ENCODE measurements at regions of chr11 and their contacts with region 1.

Region 1: DNA sequence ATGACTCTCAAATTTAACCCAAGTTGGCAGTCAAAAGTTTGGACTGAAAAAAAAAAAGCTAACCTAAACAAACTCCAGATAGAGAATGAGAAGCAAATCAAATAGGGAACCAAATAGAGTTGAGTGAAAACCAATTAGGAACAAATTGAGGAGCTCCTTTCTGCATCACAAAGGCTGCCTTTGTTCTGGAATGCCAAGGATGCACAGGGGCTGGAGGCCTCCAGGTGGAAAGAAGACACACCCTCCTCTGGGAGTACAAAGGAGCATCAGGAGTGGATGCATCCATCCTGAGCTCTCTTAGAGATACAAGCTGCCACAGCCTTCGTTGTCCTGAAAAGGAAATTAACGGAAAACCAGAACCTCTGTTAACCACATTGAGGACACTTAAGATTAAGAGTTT is 73.3 kb downstream of the MRGPRX1 start:
- DNase-seq: peak in 1 of 2 experiments; percentile 46
- H3K4me3 ChIP-seq: peak overlapping the region in 1 of 4 experiments; percentile 26; a peak in 1 of 8 replicates
- H3K27ac ChIP-seq: peak overlapping the region; percentile 0; the same call in 1 of the 2 replicates
- H3K4me1 ChIP-seq: peaks cover 0 to 12% (median 6%) of the 10 kb centered on the region in 4 experiments; a peak in 4 of 7 replicates
- H3K27me3 ChIP-seq: no peaks in the 10 kb centered on the region
- CTCF ChIP-seq: no peak
- EP300 ChIP-seq: peak in 1 of 2 experiments; percentile 62; a peak in 1 of 3 replicates
- POLR2A ChIP-seq: peak in 1 of 2 experiments; percentile 25; a peak in 1 of 3 replicates
- RAD21 ChIP-seq: no peak

Region 2: GRCh38 chr11:18749697-18750319 is 116.1 kb before region 1 on chr11:
- CTCF ChIA-PET with region 1: no interaction called
- POLR2A ChIA-PET with region 1: no interaction called
- DNase-seq: no peak
- H3K4me3 ChIP-seq: no peak overlapping the region
- H3K27ac ChIP-seq: no peak overlapping the region
- H3K4me1 ChIP-seq: peaks cover 0 to 8% (median 4%) of the 10 kb centered on the region in 4 experiments; a peak in 4 of 7 replicates
- H3K27me3 ChIP-seq: no peaks in the 10 kb centered on the region
- CTCF ChIP-seq: no peak
- EP300 ChIP-seq: no peak
- POLR2A ChIP-seq: no peak
- RAD21 ChIP-seq: no peak

Region 3: DNA sequence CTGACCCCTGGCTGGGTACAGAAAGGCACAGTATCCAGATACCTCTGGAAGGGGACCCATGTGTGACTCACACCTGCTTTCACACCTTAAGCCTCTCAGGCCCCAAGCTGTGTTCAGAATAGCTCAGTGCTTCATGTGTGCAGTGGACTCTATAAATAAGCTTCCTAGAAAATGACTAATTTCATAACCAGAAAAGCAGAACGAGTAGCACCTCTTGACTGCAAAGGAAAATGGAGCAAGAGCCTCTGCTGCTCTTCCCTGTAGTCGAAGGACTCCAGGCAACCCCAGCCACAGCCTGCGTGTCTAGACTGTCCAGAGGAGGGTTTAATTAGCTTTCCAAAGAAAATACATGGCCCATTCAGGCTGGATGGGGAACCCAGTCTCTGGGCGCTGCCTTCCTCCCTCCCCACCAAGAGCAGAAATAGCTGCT is 97.5 kb before region 1 on chr11:
- CTCF ChIA-PET with region 1: no interaction called
- POLR2A ChIA-PET with region 1: no interaction called
- DNase-seq: no peak
- H3K4me3 ChIP-seq: no peak overlapping the region
- H3K27ac ChIP-seq: no peak overlapping the region
- H3K4me1 ChIP-seq: peaks cover 0 to 15% (median 7%) of the 10 kb centered on the region in 4 experiments; a peak in 6 of 7 replicates
- H3K27me3 ChIP-seq: 0 out of 7 replicates have a peak, but pooled peaks cover 0 to 3% (median 0%) of the 10 kb centered on the region in 4 experiments
- CTCF ChIP-seq: no peak
- EP300 ChIP-seq: no peak
- POLR2A ChIP-seq: no peak
- RAD21 ChIP-seq: no peak

Region 4: GRCh38 chr11:18844753-18845367 is 21.1 kb before region 1 on chr11:
- CTCF ChIA-PET with region 1: interaction called, 48 read pairs
- POLR2A ChIA-PET with region 1: no interaction called
- DNase-seq: no peak
- H3K4me3 ChIP-seq: no peak overlapping the region
- H3K27ac ChIP-seq: no peak overlapping the region
- H3K4me1 ChIP-seq: no peaks in the 10 kb centered on the region
- H3K27me3 ChIP-seq: no peaks in the 10 kb centered on the region
- CTCF ChIP-seq: peak in 2 of 3 experiments; percentile 56 to 82; a peak in 3 of 4 replicates
- EP300 ChIP-seq: no peak
- POLR2A ChIP-seq: no peak
- RAD21 ChIP-seq: peak; percentile 61 to 66

Region 5: DNA sequence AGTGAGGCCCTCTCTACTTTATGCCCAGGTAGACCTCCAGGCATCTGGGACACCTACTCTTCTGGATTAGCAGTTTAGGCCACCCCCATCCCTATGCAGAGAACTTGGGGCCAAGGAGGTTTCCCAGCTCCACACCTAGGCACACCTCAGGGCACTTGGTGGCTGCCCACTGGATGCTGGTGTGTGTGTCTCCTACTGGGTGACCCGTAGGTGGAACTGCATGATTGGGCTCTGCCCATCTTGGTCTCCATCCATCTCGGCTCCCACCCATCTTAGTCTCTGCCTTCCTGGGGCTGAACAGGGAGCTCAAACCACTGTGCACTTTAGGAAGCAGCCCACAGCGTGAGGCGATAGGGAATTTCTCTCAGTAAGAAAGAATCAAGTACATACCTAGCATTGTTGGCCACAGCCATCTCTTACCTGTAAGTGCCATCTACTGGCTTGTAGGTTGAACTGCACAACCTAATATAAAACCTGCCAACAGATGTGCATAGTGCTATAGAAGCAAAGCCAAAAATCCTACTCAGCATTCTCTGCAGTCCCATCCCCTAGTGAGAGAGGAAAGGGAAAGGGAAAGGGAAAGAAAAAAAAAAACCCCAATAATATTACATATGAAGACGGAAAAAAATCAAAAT is 12.7 kb before region 1 on chr11:
- CTCF ChIA-PET with region 1: interaction called, 48 read pairs
- POLR2A ChIA-PET with region 1: interaction called, 3 read pairs
- DNase-seq: peak in 1 of 2 experiments; percentile 56
- H3K4me3 ChIP-seq: no peak overlapping the region
- H3K27ac ChIP-seq: no peak overlapping the region
- H3K4me1 ChIP-seq: peaks cover 0 to 3% (median 0%) of the 10 kb centered on the region in 4 experiments; a peak in 2 of 7 replicates
- H3K27me3 ChIP-seq: no peaks in the 10 kb centered on the region
- CTCF ChIP-seq: peak in 2 of 3 experiments; percentile 69 to 76; a peak in 3 of 4 replicates
- EP300 ChIP-seq: no peak
- POLR2A ChIP-seq: no peak
- RAD21 ChIP-seq: peak; percentile 87 to 90

Region 6: GRCh38 chr11:18912883-18913282 is 46.9 kb after region 1 on chr11:
- CTCF ChIA-PET with region 1: no interaction called
- POLR2A ChIA-PET with region 1: no interaction called
- DNase-seq: no peak
- H3K4me3 ChIP-seq: no peak overlapping the region
- H3K27ac ChIP-seq: no peak overlapping the region
- H3K4me1 ChIP-seq: peaks cover 0 to 3% (median 0%) of the 10 kb centered on the region in 4 experiments; a peak in 1 of 7 replicates
- H3K27me3 ChIP-seq: no peaks in the 10 kb centered on the region
- CTCF ChIP-seq: no peak
- EP300 ChIP-seq: no peak
- POLR2A ChIP-seq: no peak
- RAD21 ChIP-seq: no peak

Region 7: GRCh38 chr11:19201737-19202605 is 336.0 kb after region 1 on chr11 and contains the start of gene CSRP3:
- CTCF ChIA-PET with region 1: no interaction called
- POLR2A ChIA-PET with region 1: no interaction called
- DNase-seq: no peak
- H3K4me3 ChIP-seq: no peak within 1 kb of the TSS
- H3K27ac ChIP-seq: no peak within 1 kb of the TSS
- H3K4me1 ChIP-seq: no peaks in the 10 kb centered on the region
- H3K27me3 ChIP-seq: no peaks in the 10 kb centered on the region
- CTCF ChIP-seq: no peak
- EP300 ChIP-seq: no peak
- POLR2A ChIP-seq: no peak
- RAD21 ChIP-seq: no peak
- total RNA-seq, gene CSRP3: not detected in 2 replicates

Measured in H1 (cell line).